Activated T-helper 1 cell treated with anti-CD3 and anti-CD28 coated beads, Interleukin-12 subunit alpha, Interleukin-12 subunit beta, Interleukin-2, Interleukin-4 antibody, amounts not matched to agents 30 ng/mL and 10 ng/mL and 1 ng/mL, durations not matched to agents 14 hours and 24 hours and 36 hours (primary cell): ENCODE measurements at regions of chr3 and their contacts with region 1.

Region 1: GRCh38 chr3:128879125-128879969 is at the start of gene ACAD9:
- DNase-seq: peak; percentile 98
- H3K4me3 Mint-ChIP-seq: peak within 1 kb of the TSS; percentile 88
- H3K27ac Mint-ChIP-seq: peak within 1 kb of the TSS; percentile 92
- H3K4me1 Mint-ChIP-seq: peaks cover 71% of the 10 kb centered on the region
- H3K27me3 Mint-ChIP-seq: no peaks in the 10 kb centered on the region
- total RNA-seq, gene ACAD9: 65.3 and 67.2 TPM in 2 replicates

Region 2: DNA sequence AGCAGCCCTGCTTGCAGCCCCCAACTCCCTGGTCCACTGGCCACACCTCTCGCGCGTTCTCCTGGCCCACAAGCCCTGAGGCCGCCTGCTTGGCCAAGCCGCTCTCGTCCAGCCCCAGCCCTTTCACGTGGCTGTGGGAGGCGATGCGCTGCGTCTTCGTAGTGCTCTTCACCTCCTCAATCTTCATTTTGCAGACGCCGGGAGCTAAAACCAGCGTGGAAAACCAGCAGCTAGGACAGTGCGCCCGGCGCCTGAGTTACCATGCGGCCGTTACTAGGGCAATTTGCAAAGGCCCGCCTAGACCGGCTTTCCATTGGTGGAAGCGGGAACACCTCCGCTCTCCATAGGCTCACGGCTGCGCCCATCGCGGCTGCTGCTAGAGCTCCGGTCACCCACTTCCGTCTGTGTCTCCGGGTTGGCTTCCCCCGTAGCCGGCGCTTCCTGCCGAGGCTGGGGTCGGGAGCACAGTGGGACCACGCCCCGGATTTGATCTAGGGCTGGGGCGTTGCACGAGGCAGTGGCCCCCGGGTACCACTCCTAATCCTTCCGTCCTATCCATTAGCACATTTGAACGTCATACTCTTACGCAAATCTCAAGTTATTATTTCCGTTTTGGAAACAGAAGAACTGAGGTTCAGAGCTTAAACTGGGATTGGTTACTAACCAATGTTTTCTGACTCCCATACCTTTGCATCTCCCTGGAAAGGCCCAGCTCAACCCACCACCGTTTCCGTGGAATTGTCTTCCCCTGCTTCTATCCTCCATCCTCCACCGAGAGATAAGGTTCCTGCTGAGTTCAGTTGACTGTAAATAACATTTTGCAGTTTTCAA is 755.6 kb before region 1 on chr3 and contains the start of gene RUVBL1:
- intact Hi-C with region 1: loop called (anchors 2 kb)
- DNase-seq: peak; percentile 95
- H3K4me3 Mint-ChIP-seq: peak within 1 kb of the TSS; percentile 99
- H3K27ac Mint-ChIP-seq: peak within 1 kb of the TSS; percentile 99
- H3K4me1 Mint-ChIP-seq: peaks cover 24% of the 10 kb centered on the region
- H3K27me3 Mint-ChIP-seq: peaks cover 1% of the 10 kb centered on the region
- total RNA-seq, gene RUVBL1: 135 and 137 TPM in 2 replicates

Region 3: DNA sequence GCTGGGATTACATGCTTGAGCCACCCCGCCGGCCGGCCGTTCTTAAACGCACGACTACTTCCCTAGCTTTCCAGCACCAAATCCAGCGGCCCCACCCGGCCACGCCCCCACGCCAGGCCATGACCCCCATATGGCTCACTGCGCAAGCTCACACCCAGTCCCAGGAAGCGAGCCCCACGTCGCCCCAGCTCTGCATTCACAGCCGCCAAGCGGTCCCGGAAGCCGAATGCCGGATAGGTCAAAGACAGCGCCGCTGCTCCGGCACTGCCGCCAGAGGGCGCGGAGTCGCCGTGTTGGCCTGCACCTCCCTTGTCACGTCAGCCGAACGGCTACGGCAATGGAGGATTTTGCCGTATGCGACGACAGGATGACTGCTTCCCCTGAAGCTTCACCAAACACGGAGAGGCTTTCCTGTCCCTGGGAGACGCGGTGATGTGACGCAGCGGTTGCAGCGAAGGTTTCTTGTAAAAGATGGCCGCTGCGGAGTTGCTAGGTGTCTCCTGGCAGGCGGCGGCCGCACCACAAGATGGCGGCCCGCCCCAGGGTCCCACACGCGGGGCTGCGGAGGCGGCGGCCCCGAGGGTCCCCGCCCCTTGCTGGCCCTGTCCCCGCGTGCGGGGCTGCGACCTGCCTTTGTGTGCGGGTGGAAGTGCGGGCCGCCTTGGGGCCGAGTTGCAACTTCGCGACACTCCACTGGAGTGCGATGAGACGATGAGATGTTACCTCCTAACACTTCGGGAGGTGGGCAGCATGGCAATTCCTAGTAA is 198.6 kb before region 1 on chr3:
- intact Hi-C with region 1: loop called (anchors 1 kb)
- DNase-seq: peak; percentile 96
- H3K4me3 Mint-ChIP-seq: peak overlapping the region; percentile 85
- H3K27ac Mint-ChIP-seq: peak overlapping the region; percentile 89
- H3K4me1 Mint-ChIP-seq: peaks cover 29% of the 10 kb centered on the region
- H3K27me3 Mint-ChIP-seq: no peaks in the 10 kb centered on the region

Region 4: DNA sequence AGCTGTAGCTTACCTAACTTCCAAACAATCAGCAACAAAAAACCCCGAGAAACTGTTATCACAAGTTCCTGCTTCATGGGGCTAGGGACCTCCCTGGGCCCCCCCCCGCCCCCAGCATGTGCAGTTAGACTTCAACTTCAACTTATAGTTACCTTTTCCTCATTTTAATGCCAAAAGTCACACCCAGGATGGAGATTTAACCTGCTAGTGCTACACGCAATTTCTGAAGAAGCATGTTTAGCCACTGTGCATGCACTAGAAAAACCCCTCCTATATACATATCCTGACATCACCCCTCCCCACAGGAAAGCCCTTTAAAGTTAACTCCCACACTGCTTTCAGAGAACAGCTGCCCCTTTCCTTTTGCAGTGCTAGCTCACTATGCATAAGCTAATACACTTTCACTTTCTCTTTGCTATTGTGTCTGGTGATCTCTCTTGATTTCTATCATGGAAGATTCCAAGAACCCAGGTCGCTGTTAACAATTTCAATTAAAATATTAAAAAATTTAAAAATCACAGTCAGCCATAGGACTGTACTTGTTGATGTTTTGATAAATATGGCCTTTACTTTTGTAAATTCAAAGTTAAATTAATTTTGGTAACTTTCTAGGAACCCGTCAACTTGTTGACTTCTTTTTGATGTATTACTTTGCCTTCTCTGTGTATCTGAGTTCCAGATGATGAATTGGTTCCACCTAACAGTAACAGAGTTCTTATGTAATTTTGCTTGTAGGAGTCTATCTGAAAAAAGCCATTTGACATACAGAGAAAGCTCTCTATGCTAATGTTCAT is 75.1 kb before region 1 on chr3:
- intact Hi-C with region 1: loop called (anchors 1 kb)
- DNase-seq: peak; percentile 77
- H3K4me3 Mint-ChIP-seq: peak overlapping the region; percentile 66
- H3K27ac Mint-ChIP-seq: peak overlapping the region; percentile 95
- H3K4me1 Mint-ChIP-seq: peaks cover 82% of the 10 kb centered on the region
- H3K27me3 Mint-ChIP-seq: no peaks in the 10 kb centered on the region

Region 5: DNA sequence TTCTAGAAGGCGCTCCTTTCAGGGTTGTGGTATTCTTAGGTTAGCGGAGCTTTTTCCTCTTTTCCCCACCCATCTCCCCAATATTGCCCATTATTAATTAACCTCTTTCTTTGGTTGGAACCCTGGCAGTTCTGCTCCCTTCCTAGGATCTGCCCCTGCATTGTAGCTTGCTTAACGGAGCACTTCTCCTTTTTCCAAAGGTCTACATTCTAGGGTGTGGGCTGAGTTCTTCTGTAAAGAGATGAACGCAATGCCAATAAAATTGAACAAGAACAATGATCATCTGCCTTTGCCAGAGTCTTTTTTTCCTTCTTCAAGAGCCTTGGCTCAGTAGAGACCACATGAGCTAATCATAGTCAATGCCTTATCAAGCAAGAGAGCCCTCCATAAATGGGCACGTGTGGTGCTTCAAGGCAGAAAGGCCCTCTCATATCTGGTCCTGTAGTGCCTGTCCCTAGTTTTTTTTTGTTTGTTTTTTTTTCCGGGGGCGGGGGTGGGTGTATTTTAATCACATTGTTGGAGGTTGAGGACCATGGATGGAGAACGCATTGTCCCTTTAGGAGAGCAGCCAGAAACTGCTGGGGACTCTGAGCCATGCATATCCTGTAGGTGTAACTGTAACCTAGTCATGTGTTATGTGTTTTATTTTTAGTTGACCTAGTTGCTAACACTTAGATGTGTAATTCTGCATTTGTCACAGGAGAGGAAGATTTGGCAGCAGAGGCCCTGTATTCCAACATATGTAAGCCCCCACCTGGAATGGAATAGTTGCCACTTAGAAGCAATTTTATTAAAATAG is 64.6 kb before region 1 on chr3:
- intact Hi-C with region 1: no loop called
- DNase-seq: no peak
- H3K4me3 Mint-ChIP-seq: no peak overlapping the region
- H3K27ac Mint-ChIP-seq: no peak overlapping the region
- H3K4me1 Mint-ChIP-seq: peaks cover 9% of the 10 kb centered on the region
- H3K27me3 Mint-ChIP-seq: no peaks in the 10 kb centered on the region

Region 6: DNA sequence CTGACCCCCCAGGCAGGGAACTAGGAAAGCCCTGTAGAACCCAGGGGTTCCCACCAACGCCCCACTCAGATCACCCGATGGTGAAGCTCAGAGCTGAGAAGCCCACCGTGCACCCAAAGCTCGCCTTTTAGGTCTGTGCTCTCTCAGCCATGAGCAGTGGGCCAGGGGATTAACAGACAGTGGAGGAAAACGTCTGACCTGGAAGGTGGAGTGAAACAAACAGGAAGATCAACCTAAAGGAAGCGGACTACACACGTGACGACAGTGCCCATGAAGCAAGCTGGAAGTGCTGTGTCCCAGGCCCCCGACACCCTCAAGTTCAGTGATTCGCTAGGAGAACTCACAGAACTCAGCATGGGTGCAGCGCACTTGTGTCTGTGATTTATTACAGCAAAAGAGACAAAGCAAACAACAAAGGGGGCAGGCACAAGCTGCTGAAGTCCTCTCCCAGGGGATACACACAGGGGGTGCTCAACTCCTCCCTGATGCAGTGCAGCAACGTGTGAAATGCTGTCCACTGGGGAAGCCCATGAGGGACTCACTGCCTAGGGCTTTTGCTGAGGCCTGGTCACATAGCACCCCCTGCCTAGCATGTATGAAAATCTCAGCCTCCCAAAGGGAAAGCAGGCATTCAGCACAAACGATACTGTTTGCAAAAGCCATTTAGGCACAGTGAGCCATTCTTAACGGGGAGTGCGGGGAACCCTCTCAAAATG is 71.0 kb after region 1 on chr3:
- intact Hi-C with region 1: loop called (anchors 5 kb)
- DNase-seq: no peak
- H3K4me3 Mint-ChIP-seq: no peak overlapping the region
- H3K27ac Mint-ChIP-seq: no peak overlapping the region
- H3K4me1 Mint-ChIP-seq: no peaks in the 10 kb centered on the region
- H3K27me3 Mint-ChIP-seq: peaks cover 7% of the 10 kb centered on the region

Region 7: DNA sequence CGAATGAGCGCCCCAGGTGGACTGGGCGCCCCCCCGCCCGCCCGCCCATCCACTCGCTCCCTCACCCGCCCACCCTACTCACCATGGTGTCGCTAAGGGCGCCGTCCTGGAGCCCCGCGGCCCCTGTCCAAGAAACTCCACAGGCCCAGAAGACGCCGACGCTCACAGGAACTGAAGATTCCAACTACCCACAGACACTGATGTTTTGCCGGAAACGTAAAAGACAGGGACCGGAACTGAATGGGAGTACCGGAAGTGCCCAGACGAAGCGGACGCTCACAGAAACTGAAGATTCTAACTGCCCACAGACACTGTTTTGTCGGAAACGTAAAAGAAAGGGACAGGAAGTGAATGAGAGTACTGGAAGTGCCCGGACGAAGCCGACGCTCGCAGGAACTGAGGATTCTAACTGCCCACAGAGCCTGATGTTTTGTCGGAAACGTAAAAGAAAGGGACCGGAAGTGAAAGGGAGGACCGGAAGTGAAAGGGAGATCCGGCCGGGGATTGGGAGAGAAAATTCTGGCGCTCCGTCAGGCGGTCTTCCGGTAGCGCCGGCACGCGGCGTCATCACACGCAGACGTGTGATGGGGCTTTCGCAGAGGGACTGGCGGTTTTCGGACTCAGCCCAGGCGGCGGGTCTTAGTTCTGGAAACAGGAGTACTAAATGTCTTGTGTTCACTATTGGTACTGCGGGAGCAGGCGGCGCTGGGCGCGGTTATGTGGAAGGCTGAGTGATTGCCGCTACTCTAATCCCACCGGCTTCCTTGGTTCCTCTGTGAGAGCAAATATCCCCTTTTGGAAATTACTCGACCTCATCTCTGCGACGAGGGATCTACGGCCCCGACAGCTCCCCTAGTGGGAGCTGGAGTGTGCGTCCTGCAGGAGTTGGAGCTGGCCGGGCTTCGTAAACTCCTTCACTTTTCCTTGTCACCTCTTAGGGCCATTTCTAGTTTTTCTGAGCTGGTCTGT is 281.8 kb after region 1 on chr3 and contains the start of gene ISY1:
- intact Hi-C with region 1: loop called (anchors 1 kb)
- DNase-seq: peak; percentile 88
- H3K4me3 Mint-ChIP-seq: peak within 1 kb of the TSS; percentile 97
- H3K27ac Mint-ChIP-seq: peak within 1 kb of the TSS; percentile 99
- H3K4me1 Mint-ChIP-seq: peaks cover 34% of the 10 kb centered on the region
- H3K27me3 Mint-ChIP-seq: no peaks in the 10 kb centered on the region
- total RNA-seq, gene ISY1: 72.3 and 75.4 TPM in 2 replicates

Region 8: GRCh38 chr3:129278439-129278970 is 399.2 kb after region 1 on chr3 and contains the start of gene HMCES:
- intact Hi-C with region 1: loop called (anchors 1 kb)
- DNase-seq: peak; percentile 92
- H3K4me3 Mint-ChIP-seq: peak within 1 kb of the TSS; percentile 93
- H3K27ac Mint-ChIP-seq: peak within 1 kb of the TSS; percentile 97
- H3K4me1 Mint-ChIP-seq: peaks cover 48% of the 10 kb centered on the region
- H3K27me3 Mint-ChIP-seq: no peaks in the 10 kb centered on the region
- total RNA-seq, gene HMCES: 59.4 and 61.6 TPM in 2 replicates